Left lung (tissue), 14 donors: ENCODE measurements at regions of chr3 and their contacts with region 1.

Region 1: GRCh38 chr3:195863121-195864006 is 45.0 kb downstream of the TNK2 start:
- DNase-seq: peak; percentile 72 to 97 (median 86)
- ATAC-seq: peak; percentile 98
- H3K4me3 ChIP-seq: no peak overlapping the region
- H3K27ac ChIP-seq: peak overlapping the region in 1 of 2 donors; percentile 53
- H3K4me1 ChIP-seq: peaks cover 0 to 19% of the 10 kb centered on the region in 2 donors
- H3K27me3 ChIP-seq: peaks cover 0 to 7% of the 10 kb centered on the region in 2 donors
- CTCF ChIP-seq: peak; percentile 83 to 94

Region 2: GRCh38 chr3:195894780-195895607 is 31.6 kb after region 1 on chr3:
- intact Hi-C with region 1: loop called in 1 of 2 experiments (anchors 1 kb)
- DNase-seq: peak; percentile 57 to 89 (median 82)
- ATAC-seq: peak; percentile 71
- H3K4me3 ChIP-seq: peak overlapping the region; percentile 62
- H3K27ac ChIP-seq: peak overlapping the region; percentile 91 to 93
- H3K4me1 ChIP-seq: peaks cover 39 to 73% of the 10 kb centered on the region in 2 donors
- H3K27me3 ChIP-seq: no peaks in the 10 kb centered on the region
- CTCF ChIP-seq: peak; percentile 93 to 99

Region 3: DNA sequence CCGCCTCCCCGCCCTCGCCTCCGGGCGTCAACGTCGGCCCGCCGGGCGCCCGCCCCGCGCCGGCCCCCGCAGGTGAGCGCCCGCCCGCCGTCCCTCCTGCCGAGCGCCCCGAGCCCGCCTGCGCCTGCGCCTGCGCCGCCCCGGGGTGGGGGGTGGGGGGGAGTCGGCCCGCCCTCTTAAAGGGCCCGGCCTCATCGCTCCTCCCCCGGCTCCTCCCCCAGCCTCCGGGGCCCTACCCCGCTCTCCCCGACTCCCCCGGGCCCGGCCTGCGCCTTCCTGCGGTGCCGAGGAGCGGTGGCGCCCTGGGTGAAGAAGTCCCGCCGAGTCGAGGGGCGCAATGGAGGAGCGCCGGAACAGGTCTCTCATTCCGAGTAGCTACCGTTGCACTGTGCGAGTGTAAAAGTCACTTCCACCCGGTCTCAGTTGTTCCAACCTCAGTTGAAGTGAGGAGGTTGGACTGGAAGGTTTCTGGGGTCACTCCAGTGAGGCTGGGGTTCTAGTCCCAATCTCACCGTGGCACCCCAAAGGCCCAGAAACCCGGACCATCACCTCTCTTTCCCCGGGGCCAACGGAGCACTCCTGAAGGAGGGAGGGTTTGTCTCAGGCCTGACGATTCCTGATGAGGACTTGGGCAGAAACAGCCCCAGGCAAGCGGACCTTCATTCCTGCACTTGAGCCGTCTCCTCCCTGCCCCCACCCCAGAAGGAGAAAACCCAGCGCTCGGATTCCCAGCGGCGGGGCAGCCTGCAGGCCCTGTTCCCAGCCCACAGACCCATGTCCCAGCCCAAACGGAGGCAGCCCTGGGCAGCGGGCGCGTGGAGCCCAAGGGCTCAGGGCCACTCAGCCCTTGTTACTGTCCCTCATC is 46.5 kb after region 1 on chr3:
- intact Hi-C with region 1: loop called in 1 of 2 experiments (anchors 5 kb)
- DNase-seq: peak; percentile 80 to 96 (median 91)
- ATAC-seq: peak; percentile 78
- H3K4me3 ChIP-seq: peak overlapping the region; percentile 46 to 64
- H3K27ac ChIP-seq: peak overlapping the region; percentile 51 to 64
- H3K4me1 ChIP-seq: peaks cover 32 to 52% of the 10 kb centered on the region in 2 donors
- H3K27me3 ChIP-seq: no peaks in the 10 kb centered on the region
- CTCF ChIP-seq: no peak

Region 4: DNA sequence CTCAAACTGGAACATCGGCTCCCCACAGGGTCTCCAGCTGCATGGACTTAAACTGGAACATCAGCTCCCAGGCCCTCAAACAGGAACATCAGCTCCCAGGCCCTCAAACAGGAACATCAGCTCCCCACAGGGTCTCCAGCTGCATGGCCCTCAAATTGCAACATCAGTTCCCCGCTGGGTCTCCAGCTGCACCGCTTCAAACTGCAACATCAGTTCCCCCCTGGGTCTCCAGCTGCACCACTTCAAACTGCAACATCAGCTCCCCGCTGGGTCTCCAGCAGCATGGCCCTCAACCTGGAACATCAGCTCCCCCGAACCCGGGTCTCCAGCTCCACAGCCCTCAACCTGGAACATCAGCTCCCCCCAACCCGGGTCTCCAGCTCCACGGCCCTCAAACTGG is 136.5 kb after region 1 on chr3:
- intact Hi-C with region 1: no loop called
- DNase-seq: peak in 1 of 4 donors; percentile 13
- ATAC-seq: no peak
- H3K4me3 ChIP-seq: no peak overlapping the region
- H3K27ac ChIP-seq: no peak overlapping the region
- H3K4me1 ChIP-seq: no peaks in the 10 kb centered on the region
- H3K27me3 ChIP-seq: peaks cover 0 to 13% of the 10 kb centered on the region in 2 donors
- CTCF ChIP-seq: no peak